Right cardiac atrium (tissue), 5 donors: ENCODE measurements at regions of chr12 and their contacts with region 1.

Region 1: DNA sequence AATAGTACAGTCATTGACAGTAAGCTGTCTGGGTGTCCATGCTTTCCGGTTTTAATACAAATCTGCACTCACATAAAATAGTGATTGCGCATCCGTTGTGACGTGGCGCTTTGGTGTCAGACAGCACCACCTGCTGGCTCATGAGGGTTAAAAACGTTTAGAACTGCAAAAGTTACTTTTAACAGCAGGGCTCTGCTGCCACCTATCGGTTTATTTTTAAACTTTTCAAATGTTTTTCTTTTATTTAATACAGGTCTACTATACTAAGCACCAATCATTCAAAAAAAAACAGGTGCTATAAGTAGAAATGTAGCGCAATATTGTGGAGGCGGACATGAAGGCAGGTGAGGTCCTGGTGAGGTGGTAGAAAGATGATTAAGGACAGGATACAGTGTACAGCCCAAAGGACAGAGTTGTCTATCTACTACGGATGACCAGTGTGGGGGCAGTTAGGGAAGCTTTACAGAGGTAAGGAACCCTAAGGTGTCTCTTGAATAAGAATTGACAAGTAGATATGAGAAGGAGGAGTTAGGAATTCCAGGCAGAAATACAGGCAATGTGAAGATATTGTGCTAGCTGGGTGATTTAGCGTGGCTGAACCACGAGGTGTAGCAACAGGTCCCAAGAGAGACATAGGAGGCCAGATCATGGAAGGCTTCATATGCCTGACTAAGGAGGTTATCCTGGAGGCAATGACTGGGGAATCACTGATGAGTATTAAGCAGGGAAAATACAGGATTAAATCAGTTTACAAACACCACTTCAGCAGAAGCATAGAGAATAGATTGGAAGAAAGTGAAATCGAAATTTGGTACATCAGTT is 91.5 kb upstream of the PRB2 start:
- DNase-seq: peak; percentile 80 to 83 (median 82)
- ATAC-seq: peak; percentile 71 to 82
- H3K4me3 ChIP-seq: no peak overlapping the region
- H3K27ac ChIP-seq: no peak overlapping the region
- H3K4me1 ChIP-seq: no peaks in the 10 kb centered on the region
- H3K27me3 ChIP-seq: no peaks in the 10 kb centered on the region

Region 2: GRCh38 chr12:10759657-10760056 is 727.2 kb before region 1 on chr12:
- intact Hi-C with region 1: loop called in 1 of 4 experiments (anchors 5 kb)
- DNase-seq: no peak
- ATAC-seq: no peak
- H3K4me3 ChIP-seq: no peak overlapping the region
- H3K27ac ChIP-seq: no peak overlapping the region
- H3K4me1 ChIP-seq: no peaks in the 10 kb centered on the region
- H3K27me3 ChIP-seq: no peaks in the 10 kb centered on the region

Region 3: DNA sequence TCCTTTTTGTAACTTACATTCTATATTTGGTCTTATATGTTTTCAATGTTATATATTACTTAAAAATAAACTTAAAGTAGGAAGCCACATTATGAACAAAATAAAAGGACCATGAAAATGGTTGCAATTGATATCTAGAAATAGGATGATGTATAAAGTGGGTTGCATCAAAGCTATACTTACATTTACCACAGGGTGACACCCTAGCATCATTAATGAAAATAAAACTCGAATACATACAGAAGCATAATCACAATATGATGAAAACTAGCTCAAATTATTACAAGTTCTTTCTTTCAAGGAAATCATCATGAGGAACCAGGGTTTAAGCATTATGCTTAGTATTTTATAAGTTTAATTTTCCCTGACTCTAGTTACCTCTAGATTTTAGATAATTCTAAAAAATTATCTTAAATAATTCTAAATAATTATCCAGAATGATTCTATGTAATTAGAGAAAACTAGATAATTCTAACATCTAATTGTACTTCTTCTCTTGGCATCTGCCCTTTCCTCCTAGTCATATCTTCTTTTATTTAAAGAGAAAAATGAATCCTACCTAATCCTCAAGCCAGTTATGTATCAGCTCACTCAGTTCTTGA is 715.6 kb before region 1 on chr12:
- intact Hi-C with region 1: loop called (anchors 5 to 10 kb)
- DNase-seq: no peak
- ATAC-seq: peak; percentile 47 to 54
- H3K4me3 ChIP-seq: no peak overlapping the region
- H3K27ac ChIP-seq: no peak overlapping the region
- H3K4me1 ChIP-seq: no peaks in the 10 kb centered on the region
- H3K27me3 ChIP-seq: no peaks in the 10 kb centered on the region

Region 4: DNA sequence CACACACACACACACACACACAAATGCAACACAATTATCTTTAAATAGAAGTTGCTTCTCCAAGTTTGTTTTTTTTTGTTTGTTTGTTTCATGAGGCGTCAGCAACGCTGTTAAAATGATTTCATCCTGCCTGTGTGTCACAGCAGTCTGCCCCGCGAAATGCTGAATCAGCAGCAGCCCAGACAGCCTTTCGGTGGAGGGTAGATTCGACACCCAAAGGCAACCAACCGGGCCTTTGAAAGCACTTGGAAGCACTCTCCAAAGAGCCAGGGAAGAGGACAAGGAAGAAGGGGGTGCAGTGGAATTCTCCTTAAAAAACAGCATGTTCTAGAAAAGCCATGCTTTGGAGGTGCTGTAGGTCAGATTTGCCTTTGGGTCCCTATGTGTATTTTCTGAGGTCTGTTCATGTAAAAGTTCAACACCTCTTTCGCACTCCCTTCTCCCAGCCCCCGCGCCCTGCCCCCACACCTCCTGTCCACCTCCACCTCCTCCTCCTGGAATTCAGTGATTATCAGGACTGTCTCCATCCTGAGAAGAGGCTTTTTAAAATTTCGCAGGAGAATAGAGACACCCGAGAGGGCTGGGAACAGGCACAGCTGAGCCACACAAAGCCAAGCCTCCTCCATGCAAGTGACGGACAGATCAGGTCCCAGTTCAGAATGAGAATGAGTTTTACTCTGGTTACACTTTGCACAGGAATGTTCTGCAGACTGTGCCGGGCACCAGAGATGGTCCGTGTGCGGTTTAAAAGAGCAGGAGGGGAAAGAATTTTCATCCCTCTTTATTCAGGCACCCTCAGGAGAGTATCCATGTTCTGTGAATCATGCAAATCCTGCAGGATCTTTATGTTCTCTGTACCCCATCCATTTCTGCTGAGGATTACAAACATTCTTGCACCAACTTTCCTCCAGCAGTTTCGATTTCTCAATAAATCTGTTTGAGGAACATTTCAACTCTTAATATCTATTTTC is 340.5 kb after region 1 on chr12:
- intact Hi-C with region 1: no loop called
- DNase-seq: peak in 2 of 3 donors; percentile 39 to 62
- ATAC-seq: no peak
- H3K4me3 ChIP-seq: no peak overlapping the region
- H3K27ac ChIP-seq: peak overlapping the region; percentile 59
- H3K4me1 ChIP-seq: peaks cover 24% of the 10 kb centered on the region
- H3K27me3 ChIP-seq: no peaks in the 10 kb centered on the region

Region 5: DNA sequence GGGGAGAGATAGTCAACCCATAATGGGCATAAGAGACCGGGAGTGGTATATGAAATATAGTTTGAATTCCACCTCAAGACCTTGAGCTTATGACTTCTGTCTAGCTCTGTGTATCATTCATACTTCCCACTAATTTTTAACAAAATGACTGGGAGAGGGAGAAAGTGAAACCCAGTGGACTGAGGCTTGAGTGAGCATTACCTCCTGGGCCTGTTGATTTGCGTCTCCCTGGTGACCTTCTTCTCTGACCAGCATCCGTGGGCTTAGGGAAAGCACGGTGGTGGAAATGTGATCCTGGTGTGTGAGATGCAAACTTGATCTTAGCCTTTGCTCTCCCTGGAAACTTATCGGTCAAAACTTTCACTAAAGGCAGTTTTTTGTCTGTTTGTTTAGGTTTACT is 376.0 kb after region 1 on chr12:
- intact Hi-C with region 1: no loop called
- DNase-seq: no peak
- ATAC-seq: peak; percentile 56 to 69
- H3K4me3 ChIP-seq: no peak overlapping the region
- H3K27ac ChIP-seq: peak overlapping the region; percentile 40
- H3K4me1 ChIP-seq: peaks cover 22% of the 10 kb centered on the region
- H3K27me3 ChIP-seq: no peaks in the 10 kb centered on the region